ENCODE measurements at regions of chr22 and their contacts with region 1.

Region 1: GRCh38 chr22:21634844-21635243 is 2.3 kb downstream of the CCDC116 start:
- DNase-seq: no peak
- ATAC-seq: no peak
- H3K4me3 ChIP-seq: no peak overlapping the region
- H3K27ac ChIP-seq: no peak overlapping the region
- H3K4me1 ChIP-seq: no peaks in the 10 kb centered on the region
- CTCF ChIP-seq: no peak
- EP300 ChIP-seq: no peak
- POLR2A ChIP-seq: no peak
- RAD21 ChIP-seq: no peak

Region 2: DNA sequence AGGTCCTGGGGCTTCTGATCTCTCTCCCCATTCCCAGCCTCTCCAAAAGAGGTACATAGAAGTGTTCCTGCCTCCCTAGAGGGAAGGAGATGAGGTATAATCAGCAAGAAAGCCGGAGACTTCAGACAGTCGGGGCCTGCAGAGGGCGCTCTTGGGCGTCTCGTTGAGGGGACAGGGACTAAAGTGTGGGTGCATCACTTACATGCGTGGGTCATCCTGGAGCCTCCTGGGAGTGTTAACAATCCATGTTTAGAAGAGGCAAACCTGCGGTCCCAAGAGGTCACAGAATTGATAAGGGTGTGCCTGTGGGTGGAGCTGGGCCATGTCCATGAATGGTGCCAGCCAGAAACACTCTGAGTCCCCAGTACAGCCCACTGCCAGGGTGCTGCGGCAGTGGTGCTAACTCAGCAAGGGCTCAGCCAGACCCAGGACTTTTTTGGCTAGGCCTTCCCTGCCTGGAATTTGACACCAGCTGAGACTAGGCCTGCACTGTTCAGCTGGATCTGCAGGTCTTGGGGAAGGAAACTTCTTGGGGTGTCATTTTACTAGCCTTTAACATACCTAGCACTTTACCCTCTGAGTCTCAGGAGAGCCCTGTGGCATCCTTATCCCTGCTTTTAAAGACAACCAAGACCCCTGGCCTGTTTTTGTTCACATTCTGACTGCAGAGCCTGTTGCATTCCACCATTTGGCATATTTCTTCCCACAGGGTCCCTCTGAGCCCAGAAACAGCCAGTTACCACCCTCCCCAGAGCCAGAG is 10.5 kb before region 1 on chr22:
- CTCF ChIA-PET with region 1: interaction called, 133 read pairs
- POLR2A ChIA-PET with region 1: no interaction called
- DNase-seq: peak in 1 of 2 experiments; percentile 31
- ATAC-seq: peak; percentile 53 to 58
- H3K4me3 ChIP-seq: no peak overlapping the region
- H3K27ac ChIP-seq: 0 out of 6 replicates have a peak overlapping the region, but pooled peaks of 1 of the 2 experiments have one; percentile 46
- H3K4me1 ChIP-seq: peaks cover 15% of the 10 kb centered on the region; the same call in 1 of the 3 replicates
- CTCF ChIP-seq: peak; percentile 52
- EP300 ChIP-seq: no peak
- POLR2A ChIP-seq: no peak
- RAD21 ChIP-seq: no peak

Region 3: DNA sequence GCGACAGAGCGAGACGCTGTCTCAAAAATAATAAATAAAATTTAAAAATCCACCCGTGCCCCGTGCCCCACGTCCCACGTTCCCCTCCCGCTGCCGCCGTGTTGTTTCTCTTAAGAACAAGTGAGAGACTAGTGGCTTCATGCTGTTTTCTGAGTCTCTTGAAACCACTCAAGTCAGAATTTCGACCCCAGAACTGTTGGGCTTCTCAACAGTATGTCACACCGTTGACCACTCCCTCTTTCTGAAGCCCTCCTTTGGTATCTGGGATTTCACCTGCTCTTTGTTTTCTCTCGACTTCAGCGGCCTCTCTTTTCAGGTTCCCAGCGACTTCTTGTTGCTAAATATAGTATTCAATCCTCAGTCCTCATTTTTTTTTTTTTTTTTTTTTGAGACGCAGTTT is 31.9 kb after region 1 on chr22:
- CTCF ChIA-PET with region 1: no interaction called
- POLR2A ChIA-PET with region 1: no interaction called
- DNase-seq: no peak
- ATAC-seq: no peak
- H3K4me3 ChIP-seq: peak overlapping the region; percentile 81
- H3K27ac ChIP-seq: peak overlapping the region; percentile 93 to 98
- H3K4me1 ChIP-seq: no peaks in the 10 kb centered on the region; the same call in 2 of the 3 replicates
- CTCF ChIP-seq: no peak
- EP300 ChIP-seq: no peak
- POLR2A ChIP-seq: no peak
- RAD21 ChIP-seq: no peak